AG04450 (cell line): ENCODE measurements at regions of chr6 and their contacts with region 1.

Region 1: DNA sequence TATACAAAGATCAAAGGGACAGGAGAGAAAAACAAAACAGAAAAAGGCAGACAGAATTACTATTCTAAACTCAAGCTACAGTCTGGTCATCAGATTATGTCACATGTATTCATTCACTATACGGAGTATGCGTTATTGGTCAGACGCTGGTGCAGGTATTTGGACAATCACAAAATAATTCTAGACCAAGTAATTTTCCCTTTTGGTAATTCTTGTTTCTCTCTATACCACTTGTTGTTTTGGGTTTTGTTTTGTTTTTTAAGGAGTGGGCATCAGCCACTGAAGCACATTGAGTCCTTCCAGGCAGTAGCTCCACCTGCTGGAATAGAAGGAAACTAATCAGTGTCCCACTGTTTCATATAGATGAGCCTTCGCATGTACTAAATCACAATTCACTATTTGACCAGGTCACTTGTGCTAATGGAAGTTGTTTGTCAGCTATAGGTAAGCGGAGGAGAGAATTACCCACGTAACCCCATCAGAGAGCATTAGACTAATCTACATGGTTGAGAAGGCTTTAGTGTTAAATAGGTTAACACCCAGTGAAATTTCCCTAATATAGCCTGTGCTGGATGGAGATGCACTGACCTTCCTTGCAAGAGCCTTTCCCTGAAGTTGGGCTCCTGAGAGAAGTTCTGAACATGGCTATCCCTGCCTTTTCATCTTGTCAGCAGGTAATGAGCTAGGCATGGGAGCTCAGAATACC is 77.9 kb downstream of the TNFAIP3 start:
- DNase-seq: no peak
- H3K4me3 ChIP-seq: no peak overlapping the region
- H3K27ac ChIP-seq: no peak overlapping the region
- H3K27me3 ChIP-seq: no peaks in the 10 kb centered on the region
- CTCF ChIP-seq: peak; percentile 86

Region 2: DNA sequence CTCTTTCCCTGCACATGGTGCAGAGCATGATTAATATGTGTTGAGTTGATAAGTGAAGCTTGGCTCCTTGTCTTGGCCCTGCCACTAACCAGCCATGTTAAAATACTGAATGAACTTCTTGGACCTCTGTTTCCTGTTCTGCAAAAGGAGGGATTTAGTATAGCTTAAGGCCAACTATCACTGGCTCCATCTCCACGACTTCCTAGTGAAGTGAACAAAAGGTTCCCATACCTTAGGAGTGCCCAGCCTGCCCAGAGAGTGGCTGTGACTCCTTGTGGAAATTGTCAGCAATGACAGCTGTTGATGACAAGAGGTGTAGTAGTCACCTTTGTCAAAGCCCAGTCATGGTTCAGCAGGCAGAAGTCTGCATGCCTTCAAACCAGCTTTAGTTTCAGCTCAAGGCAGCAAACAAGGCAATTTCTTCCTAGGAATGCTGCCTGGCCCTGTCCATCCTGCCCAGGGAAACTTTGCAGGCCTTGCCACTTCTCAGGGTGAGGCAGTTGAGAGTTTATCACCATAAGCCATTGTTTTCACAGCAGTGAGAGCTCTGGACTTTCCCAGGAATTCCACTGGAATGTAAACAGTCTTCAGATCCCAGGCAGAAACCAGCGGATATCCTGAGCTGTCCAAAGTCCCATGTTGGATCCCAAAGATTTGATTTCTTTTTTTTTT is 247.5 kb before region 1 on chr6:
- CTCF ChIA-PET with region 1: interaction called, 27 read pairs
- POLR2A ChIA-PET with region 1: no interaction called
- DNase-seq: peak; percentile 30
- H3K4me3 ChIP-seq: no peak overlapping the region
- H3K27ac ChIP-seq: peak overlapping the region; percentile 49
- H3K27me3 ChIP-seq: no peaks in the 10 kb centered on the region
- CTCF ChIP-seq: no peak

Region 3: DNA sequence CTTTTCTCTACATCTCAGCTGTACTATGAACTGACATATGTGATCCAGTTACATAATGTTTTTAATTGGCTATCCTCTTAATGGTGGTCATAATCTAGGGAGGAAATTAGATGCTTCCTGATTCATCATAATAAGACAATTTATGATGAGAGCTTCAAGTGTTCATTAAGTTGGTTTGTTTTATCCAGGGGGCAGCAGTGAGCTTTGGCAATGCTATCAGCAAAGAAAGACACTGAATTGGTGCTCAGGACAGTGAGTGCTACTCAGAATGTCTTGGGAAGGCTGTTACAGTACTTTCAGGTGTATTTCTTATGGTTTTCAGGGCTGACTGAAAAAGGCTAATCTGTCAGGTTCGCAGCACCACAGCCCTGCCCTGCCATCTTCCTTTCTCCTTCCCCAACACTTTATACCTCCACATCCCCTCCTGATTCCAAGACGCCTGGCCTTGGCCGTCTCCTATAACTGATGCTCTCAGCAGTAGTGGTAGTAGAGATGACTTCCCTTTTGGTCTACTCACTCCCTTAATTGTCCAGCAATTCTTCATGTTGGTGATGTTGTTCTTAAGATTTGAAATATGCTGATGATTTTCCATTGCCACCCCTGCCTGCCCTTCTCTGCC is 144.9 kb before region 1 on chr6:
- CTCF ChIA-PET with region 1: interaction called, 14 read pairs
- POLR2A ChIA-PET with region 1: no interaction called
- DNase-seq: no peak
- H3K4me3 ChIP-seq: no peak overlapping the region
- H3K27ac ChIP-seq: no peak overlapping the region
- H3K27me3 ChIP-seq: no peaks in the 10 kb centered on the region
- CTCF ChIP-seq: peak; percentile 64

Region 4: GRCh38 chr6:137882225-137882961 is 62.6 kb before region 1 on chr6:
- CTCF ChIA-PET with region 1: interaction called, 10 read pairs
- POLR2A ChIA-PET with region 1: no interaction called
- DNase-seq: no peak
- H3K4me3 ChIP-seq: no peak overlapping the region
- H3K27ac ChIP-seq: no peak overlapping the region
- H3K27me3 ChIP-seq: no peaks in the 10 kb centered on the region
- CTCF ChIP-seq: no peak

Region 5: DNA sequence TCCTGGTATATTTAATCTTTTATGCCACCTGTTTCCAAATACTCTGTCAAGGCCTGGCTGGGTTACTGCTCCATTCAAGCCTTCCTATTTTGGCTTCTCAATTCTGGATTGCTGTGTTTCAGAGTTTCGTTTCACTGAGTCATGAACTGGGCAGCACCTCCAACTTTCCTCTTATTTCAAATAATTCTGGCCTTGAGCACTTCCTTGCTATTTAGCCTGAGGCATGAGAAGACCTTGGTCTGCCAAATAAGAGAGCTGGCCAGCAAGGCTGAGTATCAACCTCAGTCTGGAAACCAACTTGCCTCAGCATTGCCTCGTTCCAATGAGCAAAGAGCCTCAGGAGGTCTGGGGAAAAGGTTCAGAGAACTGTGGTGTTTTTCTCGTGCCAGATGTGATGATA is 11.2 kb before region 1 on chr6:
- CTCF ChIA-PET with region 1: interaction called, 22 read pairs
- POLR2A ChIA-PET with region 1: no interaction called
- DNase-seq: peak; percentile 23
- H3K4me3 ChIP-seq: no peak overlapping the region
- H3K27ac ChIP-seq: no peak overlapping the region
- H3K27me3 ChIP-seq: no peaks in the 10 kb centered on the region
- CTCF ChIP-seq: no peak